HepG2 (cell line): ENCODE measurements at regions of chr11 and their contacts with region 1.

Region 1: GRCh38 chr11:125568970-125569914 is at the start of gene EI24:
- DNase-seq: peak; percentile 84
- ATAC-seq: peak; percentile 98
- H3K4me3 ChIP-seq: peak within 1 kb of the TSS; percentile 77 to 93 (median 82)
- H3K27ac ChIP-seq: peak within 1 kb of the TSS; percentile 68
- H3K4me1 ChIP-seq: peaks cover 46% of the 10 kb centered on the region
- H3K27me3 ChIP-seq: no peaks in the 10 kb centered on the region; a peak in 1 of 5 replicates
- CTCF ChIP-seq: peak; percentile 85
- EP300 ChIP-seq: no peak
- POLR2A ChIP-seq: peak; percentile 40 to 70; a peak in 3 of 4 replicates
- RAD21 ChIP-seq: peak; percentile 52; the same call in 1 of the 2 replicates
- total RNA-seq, gene EI24: 126 and 138 TPM in 2 replicates

Region 2: GRCh38 chr11:125592305-125593112 is 23.3 kb after region 1 on chr11 and contains the start of gene STT3A:
- CTCF ChIA-PET with region 1: no interaction called
- POLR2A ChIA-PET with region 1: interaction called, 45 read pairs
- in situ Hi-C with region 1: no loop called
- intact Hi-C with region 1: loop called (anchors 1 kb)
- DNase-seq: peak; percentile 99
- ATAC-seq: peak; percentile 97
- H3K4me3 ChIP-seq: peak within 1 kb of the TSS; percentile 90 to 96 (median 95)
- H3K27ac ChIP-seq: peak within 1 kb of the TSS; percentile 91
- H3K4me1 ChIP-seq: peaks cover 40% of the 10 kb centered on the region
- H3K27me3 ChIP-seq: no peaks in the 10 kb centered on the region; a peak in 1 of 5 replicates
- CTCF ChIP-seq: 0 out of 2 replicates have a peak, but pooled peaks have one; percentile 5
- EP300 ChIP-seq: 0 out of 4 replicates have a peak, but pooled peaks of 1 of the 2 experiments have one; percentile 25
- POLR2A ChIP-seq: peak; percentile 78 to 94
- RAD21 ChIP-seq: no peak
- total RNA-seq, gene STT3A: 141 and 229 TPM in 2 replicates